Activated T-helper 1 cell treated with anti-CD3 and anti-CD28 coated beads, Interleukin-12 subunit alpha, Interleukin-12 subunit beta, Interleukin-2, Interleukin-4 antibody, amounts not matched to agents 30 ng/mL and 10 ng/mL and 1 ng/mL, durations not matched to agents 14 hours and 24 hours and 36 hours (primary cell): ENCODE measurements at regions of chr6 and their contacts with region 1.

Region 1: DNA sequence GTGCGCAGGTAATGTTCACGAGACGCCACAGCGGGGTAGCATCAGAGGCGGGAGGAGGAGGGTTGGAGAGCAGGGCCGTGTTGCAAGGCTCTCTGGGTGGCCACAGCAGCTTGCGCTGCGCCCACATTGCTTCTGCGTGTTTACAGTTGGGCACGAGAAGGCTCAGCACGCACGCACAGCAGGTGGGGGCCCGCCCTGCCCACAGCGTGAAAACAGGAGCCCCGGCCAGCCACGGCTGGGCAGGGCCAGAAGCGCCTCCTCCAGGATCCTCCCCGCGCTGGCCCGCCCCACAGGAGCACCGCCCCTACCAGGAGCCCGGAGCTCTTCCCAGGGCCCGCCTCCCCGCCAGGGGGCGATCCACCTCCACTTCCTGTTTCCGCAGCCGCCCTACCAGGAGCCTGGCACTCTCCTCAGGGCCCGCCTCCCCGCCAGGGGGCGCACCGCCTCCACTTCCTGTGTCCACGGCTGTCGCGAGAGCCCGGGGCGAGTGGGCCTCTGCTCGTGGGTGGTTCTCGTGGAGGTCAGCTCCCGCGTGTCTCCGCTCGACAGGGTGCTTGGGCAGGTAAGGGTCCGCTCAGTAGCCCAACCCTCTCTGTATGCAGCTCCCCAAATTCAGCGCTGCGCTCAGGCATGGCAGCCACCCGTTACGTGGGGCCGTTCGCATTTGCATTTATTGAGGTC is at the start of gene FAM50B:
- DNase-seq: peak; percentile 87
- H3K4me3 Mint-ChIP-seq: peak within 1 kb of the TSS; percentile 55
- H3K27ac Mint-ChIP-seq: peak within 1 kb of the TSS; percentile 59
- H3K4me1 Mint-ChIP-seq: peaks cover 24% of the 10 kb centered on the region
- H3K27me3 Mint-ChIP-seq: no peaks in the 10 kb centered on the region
- total RNA-seq, gene FAM50B: 9.0 and 9.1 TPM in 2 replicates

Region 2: DNA sequence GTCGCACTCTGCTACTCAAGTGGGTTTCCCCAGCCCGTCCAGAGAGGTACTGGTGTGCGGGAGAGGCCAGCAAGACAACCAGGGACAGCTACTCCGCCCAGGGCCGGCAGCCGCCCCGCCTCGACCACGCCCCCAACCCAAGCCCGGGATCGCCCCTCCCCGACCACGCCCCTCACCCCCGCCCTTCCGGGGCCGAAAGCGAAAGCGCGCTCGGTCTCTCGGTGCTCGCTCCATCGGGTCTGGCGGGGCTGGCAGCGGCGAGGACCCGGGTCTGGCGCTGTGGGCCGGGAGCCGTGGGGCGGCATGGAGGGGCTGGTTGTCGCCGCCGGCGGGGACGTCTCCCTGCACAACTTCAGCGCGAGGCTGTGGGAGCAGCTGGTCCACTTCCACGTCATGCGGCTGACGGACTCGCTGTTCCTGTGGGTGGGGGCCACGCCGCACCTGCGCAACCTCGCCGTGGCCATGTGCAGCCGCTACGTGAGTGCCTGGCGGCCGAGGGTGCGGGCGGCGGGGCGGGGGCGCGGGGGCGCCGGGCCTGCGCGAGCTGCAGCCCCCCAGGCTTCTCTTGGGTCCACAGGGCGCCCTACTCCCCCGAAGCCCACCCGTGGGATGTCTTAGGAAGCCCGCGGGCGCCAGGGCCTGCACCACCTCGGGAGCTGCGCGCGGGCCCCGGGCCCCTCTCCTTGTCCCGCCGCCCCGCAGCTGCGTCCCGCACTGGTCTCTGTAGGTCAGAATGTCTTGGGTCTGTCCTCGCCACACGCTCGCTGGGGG is 590.2 kb before region 1 on chr6 and contains the start of gene PSMG4:
- intact Hi-C with region 1: loop called (anchors 1 kb)
- DNase-seq: peak; percentile 91
- H3K4me3 Mint-ChIP-seq: peak within 1 kb of the TSS; percentile 99
- H3K27ac Mint-ChIP-seq: peak within 1 kb of the TSS; percentile 95
- H3K4me1 Mint-ChIP-seq: peaks cover 39% of the 10 kb centered on the region
- H3K27me3 Mint-ChIP-seq: peaks cover 11% of the 10 kb centered on the region
- total RNA-seq, gene PSMG4: 32.1 and 35.4 TPM in 2 replicates

Region 3: DNA sequence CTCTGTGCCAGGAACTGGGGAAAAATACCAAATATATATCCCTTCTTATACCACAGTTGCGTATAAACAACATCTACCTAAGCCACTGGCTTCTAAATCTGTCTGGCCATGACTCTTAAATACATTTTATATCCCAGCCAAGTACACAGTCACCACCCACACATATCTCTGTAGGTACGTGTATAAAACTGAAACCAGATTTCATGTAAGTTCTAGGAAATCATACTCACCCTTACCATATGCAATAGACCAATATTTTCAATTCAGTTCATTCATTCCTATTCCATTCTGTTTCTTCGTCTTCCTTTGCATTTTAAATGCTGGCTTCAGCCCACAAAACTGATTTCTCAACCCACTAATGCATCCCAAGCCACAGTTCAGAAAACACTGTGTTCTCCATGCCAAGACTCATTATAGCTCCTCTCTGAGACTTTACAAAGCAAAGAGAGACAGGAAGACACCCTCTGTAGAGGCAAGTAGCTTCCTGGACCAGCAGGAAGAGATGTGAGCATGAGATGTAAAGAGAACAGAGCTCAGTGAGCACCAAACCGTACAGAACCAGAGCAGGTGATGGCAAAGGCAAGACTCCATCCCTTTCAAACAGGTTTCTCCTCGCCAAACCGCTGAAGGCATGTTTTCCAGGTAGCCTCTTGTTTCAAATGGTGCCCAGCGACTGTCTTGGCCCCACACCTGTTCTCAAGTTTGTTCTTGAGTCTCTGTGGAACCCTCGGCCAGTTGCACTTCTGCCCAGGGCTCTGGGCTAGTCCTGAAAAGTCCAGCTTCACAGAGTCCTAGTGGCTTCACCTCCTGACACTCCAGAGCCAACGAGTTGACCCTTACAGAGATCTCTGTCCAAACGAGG is 18.8 kb after region 1 on chr6:
- intact Hi-C with region 1: loop called (anchors 1 kb)
- DNase-seq: no peak
- H3K4me3 Mint-ChIP-seq: peak overlapping the region; percentile 53
- H3K27ac Mint-ChIP-seq: peak overlapping the region; percentile 64
- H3K4me1 Mint-ChIP-seq: peaks cover 13% of the 10 kb centered on the region
- H3K27me3 Mint-ChIP-seq: peaks cover 3% of the 10 kb centered on the region

Region 4: DNA sequence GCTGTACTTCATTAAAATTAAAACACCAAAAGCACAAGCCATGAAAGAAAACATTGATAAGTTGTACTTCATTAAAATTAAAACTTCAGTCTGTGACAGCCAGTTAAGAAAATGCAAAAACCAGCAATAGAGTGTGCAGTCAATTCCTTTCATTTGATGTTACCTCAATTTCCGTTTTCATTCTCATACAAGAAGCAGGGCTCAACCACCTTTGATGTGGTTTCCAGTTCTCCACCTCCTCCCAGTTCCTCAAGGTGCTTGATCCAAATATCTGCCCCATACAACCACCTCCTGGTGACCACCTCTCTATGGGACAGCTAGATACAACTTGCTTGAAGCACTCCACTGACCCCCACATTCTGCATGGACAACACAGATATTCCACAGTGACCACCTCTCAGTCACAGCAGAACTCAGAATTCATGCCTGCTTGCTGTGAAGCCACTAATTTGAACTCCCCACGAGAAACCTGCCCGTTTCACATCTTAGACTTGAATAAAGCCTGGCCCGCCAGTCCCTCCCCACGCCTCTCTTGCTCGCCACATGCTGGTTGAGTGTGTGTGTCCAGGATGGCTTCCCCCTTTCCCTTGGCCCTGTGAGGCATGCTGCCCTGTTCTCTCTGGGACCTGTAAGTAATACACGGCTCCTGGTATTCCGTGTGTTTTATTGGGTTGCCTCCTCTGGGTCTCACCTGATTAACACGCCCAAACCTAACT is 66.2 kb after region 1 on chr6:
- intact Hi-C with region 1: loop called (anchors 1 kb)
- DNase-seq: peak; percentile 34
- H3K4me3 Mint-ChIP-seq: peak overlapping the region; percentile 9
- H3K27ac Mint-ChIP-seq: peak overlapping the region; percentile 64
- H3K4me1 Mint-ChIP-seq: peaks cover 31% of the 10 kb centered on the region
- H3K27me3 Mint-ChIP-seq: peaks cover 38% of the 10 kb centered on the region

Region 5: GRCh38 chr6:3929281-3929798 is 80.3 kb after region 1 on chr6:
- intact Hi-C with region 1: loop called (anchors 2 kb)
- DNase-seq: no peak
- H3K4me3 Mint-ChIP-seq: no peak overlapping the region
- H3K27ac Mint-ChIP-seq: no peak overlapping the region
- H3K4me1 Mint-ChIP-seq: no peaks in the 10 kb centered on the region
- H3K27me3 Mint-ChIP-seq: peaks cover 14% of the 10 kb centered on the region

Region 6: GRCh38 chr6:3990692-3991501 is 141.8 kb after region 1 on chr6:
- intact Hi-C with region 1: loop called (anchors 5 kb)
- DNase-seq: peak; percentile 53
- H3K4me3 Mint-ChIP-seq: no peak overlapping the region
- H3K27ac Mint-ChIP-seq: no peak overlapping the region
- H3K4me1 Mint-ChIP-seq: peaks cover 16% of the 10 kb centered on the region
- H3K27me3 Mint-ChIP-seq: no peaks in the 10 kb centered on the region

Region 7: GRCh38 chr6:4018172-4018905 is 169.3 kb after region 1 on chr6:
- intact Hi-C with region 1: loop called (anchors 2 kb)
- DNase-seq: peak; percentile 96
- H3K4me3 Mint-ChIP-seq: peak overlapping the region; percentile 99
- H3K27ac Mint-ChIP-seq: peak overlapping the region; percentile 100
- H3K4me1 Mint-ChIP-seq: peaks cover 60% of the 10 kb centered on the region
- H3K27me3 Mint-ChIP-seq: no peaks in the 10 kb centered on the region